ENCODE measurements at regions of chr9 and their contacts with region 1.

Region 1: GRCh38 chr9:21812946-21813568 is 10.6 kb downstream of the MTAP start:
- DNase-seq: peak in 9 of 10 donors; percentile 18 to 81 (median 69)
- H3K4me3 ChIP-seq: peak overlapping the region in 19 of 59 donors; percentile 4 to 50 (median 21)
- H3K27ac ChIP-seq: peak overlapping the region in 27 of 59 donors; percentile 1 to 72 (median 24)
- H3K27me3 ChIP-seq: no peaks in the 10 kb centered on the region
- CTCF ChIP-seq: peak; percentile 54 to 95 (median 89)

Region 2: GRCh38 chr9:22008736-22009562 is 195.9 kb after region 1 on chr9 and contains the start of gene CDKN2B:
- intact Hi-C with region 1: loop called (anchors 2 to 5 kb)
- DNase-seq: peak; percentile 42 to 94 (median 88)
- H3K4me3 ChIP-seq: peak within 1 kb of the TSS; percentile 50 to 86 (median 70)
- H3K27ac ChIP-seq: peak within 1 kb of the TSS in 57 of 59 donors; percentile 18 to 93 (median 80)
- H3K27me3 ChIP-seq: peaks cover 0 to 75% (median 58%) of the 10 kb centered on the region in 45 donors
- CTCF ChIP-seq: peak; percentile 48 to 89 (median 75)
- total RNA-seq, gene CDKN2B: 1.4 to 10.3 (median 2.9) TPM

Region 3: DNA sequence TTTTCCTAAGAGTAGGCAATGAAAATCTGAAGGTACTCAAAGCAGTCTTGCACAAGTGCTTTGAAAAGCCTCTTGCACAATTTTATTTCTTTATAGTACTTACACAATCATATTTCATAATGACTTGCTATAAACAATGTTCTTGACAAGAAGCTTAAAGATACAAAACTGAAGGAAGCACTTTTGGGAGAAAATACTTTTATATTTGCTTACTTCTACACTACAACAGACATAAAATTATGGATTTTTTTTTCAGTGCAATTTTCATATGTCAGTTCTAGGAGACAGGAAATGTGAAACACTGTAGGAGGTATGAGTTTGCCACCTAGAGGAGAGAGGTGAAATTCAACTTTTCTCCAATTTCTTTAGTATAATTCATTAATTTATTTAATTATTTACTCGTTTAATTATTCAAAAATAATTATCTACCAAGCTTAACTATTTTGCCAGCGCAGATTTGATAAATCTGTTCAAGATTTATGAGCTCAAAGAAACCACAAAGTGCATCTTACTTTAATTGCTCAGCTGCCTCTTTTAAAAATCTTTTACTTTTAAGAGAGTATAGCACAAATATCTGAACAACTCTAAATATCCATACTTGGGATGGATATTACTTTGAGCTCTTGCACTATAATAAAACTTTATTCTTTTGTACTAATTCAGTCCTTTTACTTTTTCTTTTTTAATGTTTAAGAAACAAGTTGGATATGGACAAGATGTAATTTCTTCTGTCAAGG is 225.1 kb after region 1 on chr9:
- intact Hi-C with region 1: loop called in 1 of 2 experiments (anchors 2 kb)
- DNase-seq: no peak
- H3K4me3 ChIP-seq: no peak overlapping the region
- H3K27ac ChIP-seq: no peak overlapping the region
- H3K27me3 ChIP-seq: peaks cover 0 to under 1% (median 0%) of the 10 kb centered on the region in 45 donors
- CTCF ChIP-seq: peak; percentile 30 to 72 (median 52)

Region 4: DNA sequence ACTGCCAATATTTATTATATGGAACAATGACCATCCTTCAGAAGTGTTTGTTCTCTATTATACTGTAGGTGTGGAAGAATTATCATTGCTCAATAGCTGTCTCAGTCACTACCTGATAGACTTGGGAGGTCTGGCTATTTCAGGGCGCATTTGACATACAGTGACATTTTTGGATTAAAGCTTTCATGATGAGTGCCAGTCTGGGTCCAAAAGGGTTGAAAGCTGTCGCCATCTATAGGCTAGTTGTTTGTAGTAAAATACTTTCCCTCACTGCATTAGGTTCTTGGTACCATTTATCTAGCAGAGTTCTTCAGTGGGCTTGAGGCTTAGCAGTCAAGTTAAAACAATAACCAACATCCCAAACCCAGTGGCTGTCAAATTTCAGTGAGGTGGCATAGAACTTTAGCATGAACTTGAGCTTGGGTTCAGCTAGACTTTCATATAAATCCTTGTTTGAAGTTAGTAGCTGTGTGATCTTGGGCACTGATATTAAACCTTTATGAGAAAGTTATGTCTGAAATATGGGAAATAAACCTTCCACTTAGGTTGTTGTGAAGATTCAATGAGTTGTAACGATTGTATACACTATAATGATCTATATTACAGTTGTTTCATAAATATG is 306.6 kb after region 1 on chr9:
- intact Hi-C with region 1: loop called in 1 of 2 experiments (anchors 2 kb)
- DNase-seq: no peak
- H3K4me3 ChIP-seq: no peak overlapping the region
- H3K27ac ChIP-seq: no peak overlapping the region
- H3K27me3 ChIP-seq: no peaks in the 10 kb centered on the region
- CTCF ChIP-seq: peak in 34 of 56 donors; percentile 15 to 58 (median 33)

Region 5: DNA sequence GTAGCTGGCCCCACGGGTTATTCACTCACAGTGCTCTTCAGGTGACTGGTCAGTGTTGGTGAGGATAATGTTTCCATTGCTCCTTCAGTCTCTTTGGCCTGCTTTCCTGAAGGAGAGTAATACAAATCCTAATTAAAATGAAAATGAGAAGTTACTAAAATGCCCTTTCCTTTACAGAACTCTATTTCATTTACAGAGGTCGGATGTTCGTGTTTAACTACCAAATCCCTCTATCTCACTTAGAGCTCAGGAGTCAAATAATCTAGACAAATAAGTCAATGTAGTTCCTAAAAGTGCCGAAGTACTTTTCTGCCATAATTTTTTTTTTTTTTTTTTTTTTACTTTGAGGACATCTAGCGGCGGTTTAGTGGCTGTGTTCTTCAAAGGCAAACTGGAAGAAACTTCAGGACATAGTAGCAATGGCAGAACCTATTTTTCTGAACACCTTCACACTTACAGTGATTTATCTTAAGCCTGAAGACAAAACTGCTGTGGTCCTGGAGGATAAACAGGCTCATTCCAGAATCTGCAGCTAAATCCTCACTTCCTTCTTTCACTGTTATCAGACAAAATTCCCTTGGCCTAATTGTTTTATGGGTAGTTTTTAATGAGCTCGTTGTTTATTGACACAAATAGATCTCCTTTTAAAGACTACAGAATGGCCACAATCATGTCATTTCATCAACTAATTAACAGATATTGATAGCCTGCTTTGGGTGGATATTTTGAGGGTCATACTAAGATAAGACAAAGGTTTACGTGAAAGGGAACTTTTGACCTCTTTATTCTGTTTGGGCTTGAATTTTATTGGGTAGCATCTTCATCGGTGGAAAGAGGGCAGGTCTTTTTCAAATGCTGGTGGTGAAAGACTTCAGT is 426.0 kb after region 1 on chr9:
- intact Hi-C with region 1: loop called (anchors 2 to 5 kb)
- DNase-seq: no peak
- H3K4me3 ChIP-seq: no peak overlapping the region
- H3K27ac ChIP-seq: no peak overlapping the region
- H3K27me3 ChIP-seq: no peaks in the 10 kb centered on the region
- CTCF ChIP-seq: peak in 54 of 56 donors; percentile 36 to 73 (median 57)

Region 6: DNA sequence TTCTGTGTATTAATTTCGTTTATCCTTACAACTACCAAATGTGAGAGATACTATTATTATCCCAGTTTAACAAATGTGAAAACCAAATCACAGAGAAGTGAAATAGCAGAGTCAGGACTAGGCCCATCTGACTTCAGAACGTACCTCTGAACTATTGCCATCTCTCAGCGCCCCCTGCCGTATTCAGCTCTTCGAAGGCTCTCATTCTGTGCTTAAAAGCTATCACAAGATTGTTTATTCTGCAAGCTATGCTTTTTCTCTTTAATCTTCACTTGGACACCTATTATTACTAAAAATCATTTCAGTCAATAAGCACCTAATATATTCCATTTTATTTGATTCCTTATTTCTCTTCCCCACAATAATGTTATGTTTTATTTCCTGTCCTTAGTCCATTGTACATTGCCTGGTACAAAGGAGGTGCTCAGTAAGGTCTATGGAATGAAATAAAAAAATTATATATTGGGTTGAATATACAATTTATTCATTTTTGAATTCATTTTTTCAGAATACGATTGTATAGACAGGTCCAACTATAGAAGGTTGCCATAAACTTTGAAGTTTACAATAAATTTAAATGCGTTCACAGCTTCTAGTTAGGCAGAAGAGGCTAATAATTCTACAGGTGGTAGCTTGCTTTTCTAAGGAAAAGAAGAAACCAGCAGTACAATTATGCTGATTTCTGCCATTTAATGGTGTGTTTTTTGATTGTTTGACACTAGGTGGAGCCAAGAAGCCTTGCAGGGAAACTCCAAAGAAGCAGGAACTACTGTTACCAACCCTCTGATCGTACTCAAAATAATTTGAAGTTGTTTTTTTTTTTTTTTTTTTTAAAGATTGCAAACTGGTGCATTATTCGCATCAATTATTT is 431.3 kb after region 1 on chr9:
- intact Hi-C with region 1: loop called (anchors 2 to 5 kb)
- DNase-seq: no peak
- H3K4me3 ChIP-seq: peak overlapping the region in 25 of 59 donors; percentile 1 to 41 (median 22)
- H3K27ac ChIP-seq: no peak overlapping the region
- H3K27me3 ChIP-seq: no peaks in the 10 kb centered on the region
- CTCF ChIP-seq: peak in 55 of 56 donors; percentile 26 to 70 (median 50)

Region 7: GRCh38 chr9:22452415-22453010 is 639.5 kb after region 1 on chr9:
- intact Hi-C with region 1: loop called (anchors 5 to 10 kb)
- DNase-seq: peak in 6 of 10 donors; percentile 12 to 65 (median 50)
- H3K4me3 ChIP-seq: no peak overlapping the region
- H3K27ac ChIP-seq: no peak overlapping the region
- H3K27me3 ChIP-seq: peaks cover 0 to 28% (median 0%) of the 10 kb centered on the region in 45 donors
- CTCF ChIP-seq: peak; percentile 66 to 92 (median 79)

Measured in dorsolateral prefrontal cortex (tissue), 120 donors.